ENCODE measurements at regions of chr14 and their contacts with region 1.

Region 1: DNA sequence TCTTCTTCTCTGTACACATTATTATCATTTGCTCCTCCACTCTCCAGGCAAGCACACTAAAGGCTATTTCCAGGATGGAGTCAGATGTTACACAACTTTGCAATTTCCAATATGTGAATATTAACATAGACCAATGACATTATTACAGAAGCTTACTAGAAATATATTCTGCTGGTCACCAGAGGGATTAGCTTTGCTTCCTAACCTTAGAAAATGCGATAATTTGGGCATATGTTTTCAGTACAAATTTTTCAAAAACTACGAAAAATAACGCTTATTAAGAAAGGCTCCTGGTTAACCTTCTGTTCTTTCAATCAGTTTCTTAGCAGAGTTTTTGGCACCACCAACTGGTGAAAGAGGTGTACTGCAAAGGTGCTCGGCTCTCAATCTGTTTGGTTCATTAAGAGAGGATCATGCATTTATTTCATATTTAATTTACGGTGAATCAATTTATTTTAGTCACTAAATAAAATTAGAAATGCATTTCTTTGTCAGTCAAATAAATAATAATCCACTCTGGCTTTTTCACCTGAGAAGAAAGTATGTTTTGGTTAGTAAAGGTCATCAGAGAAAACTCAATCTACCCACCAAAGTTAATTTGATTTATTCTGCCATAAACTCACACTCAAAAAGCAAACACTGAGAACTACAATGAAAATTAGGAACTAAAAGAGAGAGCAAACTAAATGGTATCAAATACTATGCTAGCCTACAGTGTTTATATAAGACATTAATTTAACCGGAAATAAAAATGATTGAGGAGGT is 39.2 kb downstream of the EFCAB11 start:
- DNase-seq: peak in 6 of 10 donors; percentile 35 to 88 (median 68)

Region 2: GRCh38 chr14:89027097-89027740 is 888.1 kb before region 1 on chr14:
- intact Hi-C with region 1: loop called (anchors 5 kb)
- DNase-seq: peak in 9 of 10 donors; percentile 30 to 93 (median 49)

Region 3: DNA sequence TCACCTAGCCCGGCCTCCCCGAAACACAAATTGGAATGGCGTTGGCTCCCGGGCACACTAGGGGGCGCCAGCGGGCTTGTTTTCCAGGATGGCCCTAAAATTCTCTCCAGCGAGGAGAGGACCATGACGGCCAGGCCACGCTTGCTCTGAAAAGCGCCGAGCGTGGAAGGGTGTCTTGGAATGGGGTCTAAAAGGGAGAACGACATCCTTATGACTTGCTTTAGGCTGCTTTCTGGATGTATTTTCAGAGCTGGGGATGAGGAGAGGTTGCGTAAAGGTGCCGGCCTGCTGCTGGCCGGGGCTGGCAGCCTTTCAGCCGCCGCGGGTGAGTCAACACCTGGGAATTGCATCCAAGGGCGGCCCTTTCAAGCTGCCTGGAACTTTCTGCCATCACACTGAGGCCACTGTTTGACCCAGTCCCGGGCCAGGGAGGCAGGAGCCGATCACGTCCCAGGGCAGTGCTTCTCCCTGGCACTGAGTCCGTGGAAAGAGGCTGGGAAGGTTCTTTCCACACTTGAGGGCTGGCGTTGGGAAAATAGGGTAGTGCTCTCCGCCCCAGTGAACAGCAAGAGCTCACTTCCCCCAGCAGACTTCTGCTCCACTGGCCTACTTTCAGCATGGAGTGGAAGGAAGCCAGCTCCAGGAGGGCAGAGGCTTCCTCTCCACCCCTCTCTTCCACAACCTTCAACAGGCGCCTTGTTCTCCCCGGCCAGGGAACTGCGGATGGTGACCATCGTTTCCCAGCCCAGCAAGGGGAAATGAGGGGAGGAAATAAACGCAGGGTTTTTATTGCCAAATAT is 874.6 kb before region 1 on chr14:
- intact Hi-C with region 1: loop called (anchors 2 kb)
- DNase-seq: peak; percentile 80 to 97 (median 92)

Region 4: DNA sequence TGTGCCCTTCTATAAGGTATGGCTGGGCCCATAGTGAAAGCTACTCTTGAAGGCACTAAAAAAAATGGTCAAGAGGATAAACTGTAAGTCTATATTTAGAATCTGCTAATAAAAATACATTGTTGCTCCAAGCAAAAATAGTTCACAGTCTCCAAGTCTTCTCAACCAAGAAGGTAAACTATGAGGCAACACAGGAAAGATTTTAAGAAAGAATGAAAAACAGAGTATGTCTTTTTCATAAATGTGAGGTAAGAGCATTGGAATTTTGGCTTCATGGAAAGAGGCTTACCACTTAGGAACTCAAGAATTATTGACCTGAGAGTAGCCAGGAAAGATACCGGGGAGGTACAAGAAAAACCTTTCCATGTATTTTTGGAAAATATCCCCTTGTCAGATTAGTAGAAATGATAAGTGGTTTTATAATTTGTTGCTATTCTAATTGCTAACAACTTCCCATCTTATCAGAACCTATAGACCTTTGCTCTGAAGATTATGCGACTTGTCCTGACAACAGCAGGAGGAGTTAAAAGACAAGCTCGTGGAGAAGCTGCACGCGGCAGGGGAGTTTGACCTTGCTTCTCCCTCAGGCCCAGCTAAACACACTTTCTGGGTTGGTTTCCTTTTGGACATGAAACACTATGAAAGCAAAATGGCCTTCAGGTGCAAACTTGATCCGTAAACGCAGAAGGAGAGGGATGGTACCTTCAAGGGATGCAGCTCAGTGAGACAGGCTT is 736.3 kb before region 1 on chr14:
- intact Hi-C with region 1: loop called (anchors 5 kb)
- DNase-seq: no peak

Region 5: GRCh38 chr14:89416002-89416995 is 499.0 kb before region 1 on chr14:
- intact Hi-C with region 1: loop called (anchors 5 kb)
- DNase-seq: peak; percentile 96 to 100 (median 98)

Region 6: GRCh38 chr14:89701211-89702043 is 213.9 kb before region 1 on chr14:
- intact Hi-C with region 1: loop called (anchors 5 kb)
- DNase-seq: peak; percentile 52 to 95 (median 76)

Region 7: GRCh38 chr14:89792489-89793366 is 122.6 kb before region 1 on chr14:
- intact Hi-C with region 1: no loop called
- DNase-seq: no peak

Region 8: DNA sequence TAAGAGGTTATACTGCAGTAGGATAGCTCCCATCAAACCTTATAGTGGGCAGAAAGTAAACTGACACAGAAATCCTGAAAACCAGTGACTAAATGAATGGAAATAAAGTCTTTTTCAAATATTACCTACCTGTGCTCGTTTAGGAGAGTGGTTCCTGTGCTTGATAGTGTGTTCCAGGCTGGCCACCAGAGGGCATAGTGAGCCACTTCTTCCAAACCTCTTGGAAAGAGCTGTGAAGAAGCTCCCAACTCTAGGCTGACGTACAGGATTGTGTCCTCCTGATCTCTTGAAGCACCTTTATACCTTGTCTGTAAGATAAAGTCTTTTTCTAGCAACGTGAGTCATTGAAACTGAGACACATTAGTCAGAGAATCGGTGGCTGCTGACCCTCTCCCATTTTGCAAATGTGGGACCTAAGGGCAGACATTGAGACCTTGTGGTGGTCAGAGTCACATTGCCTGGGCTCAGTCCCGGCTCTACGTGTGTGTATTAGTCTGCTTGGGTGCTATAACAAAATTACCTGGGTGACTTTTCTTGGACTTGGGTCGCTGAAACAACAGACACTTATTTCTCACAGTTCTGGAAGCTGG is 58.0 kb after region 1 on chr14:
- intact Hi-C with region 1: no loop called
- DNase-seq: peak; percentile 56 to 97 (median 82)

Measured in posterior cingulate gyrus (tissue), 11 donors.